ENCODE measurements at regions of chr22 and their contacts with region 1.

Region 1: DNA sequence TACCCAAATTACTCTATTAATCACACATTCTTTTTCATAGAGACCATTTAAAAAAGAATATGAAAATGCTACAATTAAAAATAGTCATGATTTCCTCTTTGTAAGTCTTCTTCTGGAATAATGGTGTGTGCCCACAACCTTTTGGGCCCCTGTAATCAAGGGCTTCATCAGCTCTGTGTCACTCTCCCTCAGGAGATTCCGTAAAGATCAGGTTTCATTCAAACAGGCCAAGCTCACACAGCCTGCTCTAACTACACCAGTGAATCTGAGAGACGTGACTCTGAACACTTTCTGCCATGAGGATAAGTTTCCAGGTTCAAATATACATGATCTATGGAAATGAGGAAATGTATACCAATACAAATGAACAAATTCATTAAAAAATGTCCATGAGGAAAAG is 9.5 kb downstream of the DRICH1 start:
- DNase-seq: no peak
- H3K4me3 ChIP-seq: no peak overlapping the region
- H3K27ac ChIP-seq: no peak overlapping the region
- H3K4me1 ChIP-seq: no peaks in the 10 kb centered on the region
- H3K27me3 ChIP-seq: no peaks in the 10 kb centered on the region
- CTCF ChIP-seq: no peak
- POLR2A ChIP-seq: no peak

Region 2: DNA sequence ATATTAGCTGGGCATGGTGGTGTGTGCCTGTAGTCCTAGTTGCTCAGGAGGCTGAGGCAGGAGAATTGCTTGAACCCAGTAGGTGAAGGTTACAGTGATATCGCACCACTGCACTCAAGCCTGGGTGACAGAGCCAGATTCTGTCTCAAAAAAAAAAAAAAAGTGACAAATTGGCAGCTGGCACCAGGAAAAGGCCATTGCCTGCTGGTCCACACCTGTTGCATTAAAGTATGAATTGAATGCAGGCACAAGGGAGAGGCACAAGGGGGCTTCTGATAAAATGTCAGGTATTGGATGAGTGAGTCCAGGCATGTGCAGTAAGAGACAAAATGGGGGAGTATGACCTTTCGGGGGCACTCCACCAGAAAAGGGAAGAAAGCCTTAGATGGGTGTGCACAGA is 100.1 kb after region 1 on chr22:
- intact Hi-C with region 1: loop called in 1 of 2 experiments (anchors 5 kb)
- DNase-seq: no peak
- H3K4me3 ChIP-seq: no peak overlapping the region
- H3K27ac ChIP-seq: no peak overlapping the region
- H3K4me1 ChIP-seq: no peaks in the 10 kb centered on the region
- H3K27me3 ChIP-seq: no peaks in the 10 kb centered on the region
- CTCF ChIP-seq: no peak
- POLR2A ChIP-seq: no peak

Region 3: DNA sequence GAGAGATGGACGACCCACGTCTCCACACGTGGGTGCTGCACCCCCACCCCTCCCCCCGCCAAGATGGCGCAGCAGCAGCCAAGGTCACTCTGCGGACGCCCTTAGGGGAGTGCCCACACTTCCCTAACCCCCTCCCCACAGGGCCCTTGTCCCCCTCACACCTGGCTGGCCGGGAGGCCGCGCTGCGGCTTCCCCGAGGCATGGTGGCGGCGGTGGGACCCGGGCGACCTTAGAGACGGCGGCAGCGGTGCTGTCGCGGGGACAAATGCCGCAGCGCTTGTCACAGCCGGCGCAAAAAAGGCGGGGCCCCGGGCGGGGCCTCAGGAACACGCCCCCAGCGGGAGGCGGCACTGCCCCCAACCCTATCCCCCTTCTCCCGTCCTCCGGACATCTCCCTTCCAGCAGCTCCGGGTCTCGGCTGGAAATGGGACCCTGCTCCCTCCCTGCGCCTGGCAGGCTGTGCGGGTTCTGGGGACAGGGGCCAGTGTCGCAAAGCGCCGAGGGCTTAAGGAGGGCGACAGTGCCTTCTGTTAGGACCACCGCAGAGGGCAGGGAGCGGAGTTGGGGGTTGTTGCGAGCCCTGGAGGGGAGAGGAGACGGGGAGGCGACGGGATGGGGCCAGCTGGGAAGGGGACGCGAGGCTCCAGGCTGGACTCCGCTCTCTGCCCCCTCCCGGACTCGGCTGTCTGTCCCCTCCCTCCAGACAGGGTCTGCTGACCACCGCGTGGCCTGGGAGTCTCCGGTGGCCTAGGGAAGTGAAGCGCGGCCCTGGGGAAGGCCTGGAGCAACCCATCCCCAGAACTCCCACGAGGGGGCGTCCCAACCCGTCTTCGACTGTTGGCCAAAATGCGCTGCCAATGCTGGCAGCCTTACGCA is 145.3 kb after region 1 on chr22 and contains the start of gene CHCHD10:
- intact Hi-C with region 1: loop called in 1 of 2 experiments (anchors 10 kb)
- DNase-seq: peak; percentile 86 to 92 (median 89)
- H3K4me3 ChIP-seq: peak within 1 kb of the TSS; percentile 47 to 88 (median 60)
- H3K27ac ChIP-seq: peak within 1 kb of the TSS; percentile 13 to 88 (median 74)
- H3K4me1 ChIP-seq: peaks cover 0 to 34% of the 10 kb centered on the region in 2 donors
- H3K27me3 ChIP-seq: no peaks in the 10 kb centered on the region
- CTCF ChIP-seq: peak; percentile 59 to 84 (median 75)
- POLR2A ChIP-seq: peak; percentile 72 to 80
- total RNA-seq, gene CHCHD10: 4.6 to 177 (median 118) TPM

Region 4: GRCh38 chr22:23849009-23850006 is 226.7 kb after region 1 on chr22:
- intact Hi-C with region 1: loop called in 1 of 2 experiments (anchors 5 kb)
- DNase-seq: peak; percentile 73 to 90 (median 84)
- H3K4me3 ChIP-seq: no peak overlapping the region
- H3K27ac ChIP-seq: no peak overlapping the region
- H3K4me1 ChIP-seq: peaks cover 4 to 19% of the 10 kb centered on the region in 2 donors
- H3K27me3 ChIP-seq: no peaks in the 10 kb centered on the region
- CTCF ChIP-seq: peak; percentile 90 to 98 (median 96)
- POLR2A ChIP-seq: no peak

Measured in adrenal gland (tissue), 19 donors.